Activated CD8-positive, alpha-beta T cell treated with anti-CD3 and anti-CD28 coated beads for 36 hours (primary cell): ENCODE measurements at regions of chr17 and their contacts with region 1.

Region 1: GRCh38 chr17:41648411-41649195 is 24.2 kb upstream of the KRT17 start:
- DNase-seq: peak; percentile 88
- ATAC-seq: peak; percentile 92
- H3K4me3 Mint-ChIP-seq: peak overlapping the region; percentile 43
- H3K27ac Mint-ChIP-seq: peak overlapping the region; percentile 65
- H3K4me1 Mint-ChIP-seq: peaks cover 7% of the 10 kb centered on the region
- H3K27me3 Mint-ChIP-seq: peaks cover 3% of the 10 kb centered on the region
- CTCF ChIP-seq: peak; percentile 88

Region 2: GRCh38 chr17:40909351-40909750 is 739.3 kb before region 1 on chr17:
- CTCF ChIA-PET with region 1: interaction called, 15 read pairs
- POLR2A ChIA-PET with region 1: no interaction called
- intact Hi-C with region 1: no loop called
- DNase-seq: peak; percentile 82
- ATAC-seq: peak; percentile 94
- H3K4me3 Mint-ChIP-seq: no peak overlapping the region
- H3K27ac Mint-ChIP-seq: no peak overlapping the region
- H3K4me1 Mint-ChIP-seq: no peaks in the 10 kb centered on the region
- H3K27me3 Mint-ChIP-seq: peaks cover 23% of the 10 kb centered on the region
- CTCF ChIP-seq: peak; percentile 80

Region 3: GRCh38 chr17:41474863-41475262 is 173.7 kb before region 1 on chr17:
- CTCF ChIA-PET with region 1: no interaction called
- POLR2A ChIA-PET with region 1: no interaction called
- intact Hi-C with region 1: no loop called
- DNase-seq: no peak
- ATAC-seq: no peak
- H3K4me3 Mint-ChIP-seq: no peak overlapping the region
- H3K27ac Mint-ChIP-seq: no peak overlapping the region
- H3K4me1 Mint-ChIP-seq: no peaks in the 10 kb centered on the region
- H3K27me3 Mint-ChIP-seq: no peaks in the 10 kb centered on the region
- CTCF ChIP-seq: no peak

Region 4: DNA sequence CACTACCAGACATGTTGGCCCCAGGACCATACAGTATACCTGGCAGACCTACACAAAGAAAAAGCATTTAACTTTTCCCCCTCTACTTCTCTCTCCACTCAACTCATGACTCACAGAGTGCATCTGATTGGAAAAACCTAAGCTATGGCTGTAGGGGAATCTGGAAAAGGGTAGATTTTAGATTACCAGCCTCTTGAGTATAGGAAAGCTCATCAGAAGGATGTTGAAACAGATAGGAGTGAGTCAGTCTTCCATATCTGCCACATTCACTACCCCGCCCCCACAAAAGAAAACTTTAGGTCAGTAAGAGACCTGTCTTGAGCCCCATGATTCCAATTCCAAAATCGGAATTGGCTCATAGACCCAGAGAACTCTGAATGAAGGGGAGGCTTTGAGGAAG is 89.1 kb before region 1 on chr17:
- CTCF ChIA-PET with region 1: interaction called, 15 read pairs
- POLR2A ChIA-PET with region 1: no interaction called
- intact Hi-C with region 1: no loop called
- DNase-seq: no peak
- ATAC-seq: no peak
- H3K4me3 Mint-ChIP-seq: no peak overlapping the region
- H3K27ac Mint-ChIP-seq: no peak overlapping the region
- H3K4me1 Mint-ChIP-seq: no peaks in the 10 kb centered on the region
- H3K27me3 Mint-ChIP-seq: peaks cover 35% of the 10 kb centered on the region
- CTCF ChIP-seq: no peak

Region 5: GRCh38 chr17:41593311-41593981 is 55.2 kb before region 1 on chr17:
- CTCF ChIA-PET with region 1: interaction called, 12 read pairs
- POLR2A ChIA-PET with region 1: no interaction called
- intact Hi-C with region 1: no loop called
- DNase-seq: no peak
- ATAC-seq: no peak
- H3K4me3 Mint-ChIP-seq: no peak overlapping the region
- H3K27ac Mint-ChIP-seq: no peak overlapping the region
- H3K4me1 Mint-ChIP-seq: no peaks in the 10 kb centered on the region
- H3K27me3 Mint-ChIP-seq: peaks cover 11% of the 10 kb centered on the region
- CTCF ChIP-seq: no peak

Region 6: GRCh38 chr17:41665566-41666236 is 17.1 kb after region 1 on chr17:
- CTCF ChIA-PET with region 1: interaction called, 435 read pairs
- POLR2A ChIA-PET with region 1: interaction called, 4 read pairs
- intact Hi-C with region 1: no loop called
- DNase-seq: peak; percentile 92
- ATAC-seq: peak; percentile 81
- H3K4me3 Mint-ChIP-seq: peak overlapping the region; percentile 81
- H3K27ac Mint-ChIP-seq: peak overlapping the region; percentile 100
- H3K4me1 Mint-ChIP-seq: peaks cover 33% of the 10 kb centered on the region
- H3K27me3 Mint-ChIP-seq: peaks cover 1% of the 10 kb centered on the region
- CTCF ChIP-seq: peak; percentile 95

Region 7: DNA sequence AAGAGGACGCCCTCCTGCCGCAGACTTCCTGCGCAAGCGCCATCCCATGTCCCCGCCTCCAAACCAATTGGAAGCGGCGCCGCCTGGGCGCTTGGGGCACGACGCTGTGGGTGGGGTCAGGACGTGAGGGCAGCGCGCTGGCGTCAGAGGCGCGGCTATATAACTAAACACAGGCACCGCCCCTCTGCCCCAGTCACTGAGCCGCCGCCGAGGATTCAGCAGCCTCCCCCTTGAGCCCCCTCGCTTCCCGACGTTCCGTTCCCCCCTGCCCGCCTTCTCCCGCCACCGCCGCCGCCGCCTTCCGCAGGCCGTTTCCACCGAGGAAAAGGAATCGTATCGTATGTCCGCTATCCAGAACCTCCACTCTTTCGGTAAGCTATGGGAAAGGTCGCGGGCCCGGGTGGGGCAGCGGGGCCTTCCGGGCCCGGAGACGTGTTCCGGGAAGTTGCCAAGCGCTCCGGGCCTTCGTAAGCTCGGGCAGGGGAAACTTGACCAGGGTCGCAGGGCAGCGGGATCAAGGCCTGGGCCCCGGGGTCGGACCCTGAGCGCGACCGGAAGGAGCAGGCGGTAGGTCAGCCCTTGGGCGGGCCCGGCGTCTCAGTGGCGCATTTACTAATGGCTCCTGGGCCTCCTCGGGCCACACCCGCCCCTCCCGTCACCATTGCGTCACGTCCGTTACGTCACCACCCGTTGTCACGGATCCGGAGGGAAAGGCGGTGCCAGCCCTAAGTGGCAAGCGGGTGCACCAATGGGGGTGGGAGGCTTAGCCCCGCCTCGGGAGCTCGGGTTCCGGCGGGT is 40.3 kb after region 1 on chr17 and contains the start of gene EIF1:
- CTCF ChIA-PET with region 1: interaction called, 6 read pairs
- POLR2A ChIA-PET with region 1: interaction called, 14 read pairs
- intact Hi-C with region 1: no loop called
- DNase-seq: peak; percentile 100
- ATAC-seq: peak; percentile 77
- H3K4me3 Mint-ChIP-seq: peak within 1 kb of the TSS; percentile 97
- H3K27ac Mint-ChIP-seq: peak within 1 kb of the TSS; percentile 93
- H3K4me1 Mint-ChIP-seq: peaks cover 26% of the 10 kb centered on the region
- H3K27me3 Mint-ChIP-seq: no peaks in the 10 kb centered on the region
- CTCF ChIP-seq: no peak
- total RNA-seq, gene EIF1: 924 to 930 TPM